Mucosa of descending colon (tissue), 3 donors: ENCODE measurements at regions of chr10 and their contacts with region 1.

Region 1: GRCh38 chr10:88791924-88792323 is 10.6 kb upstream of the LIPM start:
- DNase-seq: peak in 2 of 3 donors; percentile 16 to 20
- ATAC-seq: peak; percentile 65
- H3K4me3 ChIP-seq: no peak overlapping the region
- H3K4me1 ChIP-seq: no peaks in the 10 kb centered on the region
- CTCF ChIP-seq: no peak

Region 2: DNA sequence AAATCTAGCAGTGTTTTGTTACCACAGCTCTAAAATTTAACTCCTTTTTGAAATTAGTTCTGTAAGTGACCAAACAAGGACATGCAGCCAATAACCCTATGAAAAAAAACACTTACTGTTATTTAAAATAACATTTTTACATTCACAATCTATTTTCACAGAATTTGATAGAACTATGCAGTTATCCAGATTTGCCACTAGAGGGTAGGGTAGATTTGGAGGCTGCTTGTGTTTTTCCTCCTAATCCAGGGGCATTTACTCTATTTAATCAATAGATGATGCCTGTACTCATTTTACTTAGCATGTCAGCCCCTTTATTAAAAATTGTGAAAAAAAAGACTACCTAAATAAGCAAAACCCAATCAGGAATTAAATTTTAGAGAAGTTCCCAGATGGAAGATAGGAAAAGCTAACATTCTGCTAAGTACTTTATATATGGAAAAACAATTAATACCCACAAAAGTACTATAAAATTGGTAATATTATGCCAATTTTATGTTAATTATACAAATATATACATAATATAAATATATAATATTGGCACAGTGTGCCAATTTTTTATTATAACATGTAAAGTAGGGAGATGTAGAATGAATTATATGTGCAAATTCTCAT is 104.0 kb before region 1 on chr10:
- intact Hi-C with region 1: loop called in 1 of 2 experiments (anchors 5 kb)
- DNase-seq: no peak
- ATAC-seq: peak; percentile 32
- H3K4me3 ChIP-seq: no peak overlapping the region
- H3K4me1 ChIP-seq: no peaks in the 10 kb centered on the region
- CTCF ChIP-seq: peak; percentile 53

Region 3: GRCh38 chr10:88728107-88728763 is 63.7 kb before region 1 on chr10:
- intact Hi-C with region 1: no loop called
- DNase-seq: peak in 2 of 3 donors; percentile 30 to 50
- ATAC-seq: no peak
- H3K4me3 ChIP-seq: no peak overlapping the region
- H3K4me1 ChIP-seq: no peaks in the 10 kb centered on the region
- CTCF ChIP-seq: no peak